Activated naive CD4-positive, alpha-beta T cell treated with anti-CD3 and anti-CD28 coated beads for 36 hours (primary cell): ENCODE measurements at regions of chr6 and their contacts with region 1.

Region 1: DNA sequence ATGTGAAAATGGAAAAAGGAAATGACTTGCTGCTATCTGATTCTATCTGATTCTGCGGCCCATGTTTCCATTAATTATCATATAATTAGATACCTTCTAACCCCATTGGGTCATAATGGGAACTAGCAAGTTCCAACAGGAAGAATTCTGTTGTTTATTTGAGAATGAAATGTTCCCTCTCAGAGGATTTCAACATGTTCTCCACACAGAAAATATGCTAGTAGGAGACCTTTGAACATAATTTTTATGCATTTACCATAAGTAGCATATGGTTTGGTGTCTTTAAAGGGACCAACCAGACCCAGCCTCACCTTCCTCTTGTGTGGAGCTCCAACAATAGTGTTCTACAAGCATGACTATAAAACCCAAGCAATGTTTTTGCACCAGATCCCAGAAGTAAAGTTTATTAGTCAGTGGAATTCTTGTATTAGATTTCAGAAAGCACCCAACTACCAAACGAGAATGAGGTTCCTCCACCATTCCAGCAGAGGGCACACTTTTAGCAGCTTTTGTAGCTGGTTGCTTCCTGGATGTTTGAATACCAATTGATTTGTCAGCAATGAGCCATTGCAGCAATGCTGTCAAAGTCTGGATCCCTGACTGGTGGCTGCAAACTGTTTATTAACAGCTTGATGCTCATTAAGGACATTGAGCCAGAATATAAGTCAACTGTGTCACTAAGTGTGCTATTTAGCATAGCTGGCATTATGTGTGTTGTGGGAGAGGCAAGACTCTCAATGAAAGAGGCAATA is 143.6 kb upstream of the GJE1 start:
- DNase-seq: peak; percentile 64
- H3K4me3 Mint-ChIP-seq: no peak overlapping the region
- H3K27ac Mint-ChIP-seq: no peak overlapping the region
- H3K4me1 Mint-ChIP-seq: no peaks in the 10 kb centered on the region
- H3K27me3 Mint-ChIP-seq: peaks cover 7% of the 10 kb centered on the region

Region 2: DNA sequence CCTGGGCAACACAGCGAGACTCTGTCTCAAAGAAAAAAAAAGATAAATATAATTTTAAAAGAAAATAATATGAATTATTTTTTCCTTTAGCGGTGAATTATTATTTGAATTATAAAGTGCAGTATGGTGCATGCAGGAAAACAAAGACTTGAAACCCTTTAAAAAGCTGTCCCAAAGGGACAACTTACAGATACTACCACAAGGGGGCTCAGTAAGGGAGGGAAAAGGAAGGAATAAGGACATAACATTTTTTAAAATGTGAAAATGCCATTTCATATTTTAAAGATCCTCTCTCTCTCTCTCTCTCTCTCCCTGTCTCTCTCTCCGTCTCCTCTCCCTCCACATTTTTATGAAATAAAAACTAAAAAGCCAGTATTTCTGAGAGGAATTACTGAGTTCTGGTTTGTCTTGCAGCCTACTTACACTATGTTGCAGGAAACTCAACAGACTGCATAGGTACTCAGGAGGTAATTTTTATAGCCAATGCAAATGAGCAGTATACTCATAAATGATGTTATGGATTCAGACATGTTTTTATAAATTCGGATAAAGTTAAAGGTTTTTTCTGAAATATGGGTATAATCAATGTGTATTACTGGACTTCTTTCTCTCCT is 311.4 kb before region 1 on chr6:
- CTCF ChIA-PET with region 1: no interaction called
- intact Hi-C with region 1: loop called (anchors 5 kb)
- DNase-seq: no peak
- H3K4me3 Mint-ChIP-seq: no peak overlapping the region
- H3K27ac Mint-ChIP-seq: no peak overlapping the region
- H3K4me1 Mint-ChIP-seq: no peaks in the 10 kb centered on the region
- H3K27me3 Mint-ChIP-seq: no peaks in the 10 kb centered on the region

Region 3: GRCh38 chr6:142013286-142013685 is 24.2 kb after region 1 on chr6:
- CTCF ChIA-PET with region 1: interaction called, 3 read pairs
- intact Hi-C with region 1: loop called (anchors 2 kb)
- DNase-seq: no peak
- H3K4me3 Mint-ChIP-seq: no peak overlapping the region
- H3K27ac Mint-ChIP-seq: no peak overlapping the region
- H3K4me1 Mint-ChIP-seq: peaks cover 14% of the 10 kb centered on the region
- H3K27me3 Mint-ChIP-seq: peaks cover 27% of the 10 kb centered on the region

Region 4: GRCh38 chr6:142045380-142046278 is 56.5 kb after region 1 on chr6:
- CTCF ChIA-PET with region 1: interaction called, 9 read pairs
- intact Hi-C with region 1: loop called (anchors 1 kb)
- DNase-seq: no peak
- H3K4me3 Mint-ChIP-seq: no peak overlapping the region
- H3K27ac Mint-ChIP-seq: no peak overlapping the region
- H3K4me1 Mint-ChIP-seq: no peaks in the 10 kb centered on the region
- H3K27me3 Mint-ChIP-seq: peaks cover 23% of the 10 kb centered on the region

Region 5: DNA sequence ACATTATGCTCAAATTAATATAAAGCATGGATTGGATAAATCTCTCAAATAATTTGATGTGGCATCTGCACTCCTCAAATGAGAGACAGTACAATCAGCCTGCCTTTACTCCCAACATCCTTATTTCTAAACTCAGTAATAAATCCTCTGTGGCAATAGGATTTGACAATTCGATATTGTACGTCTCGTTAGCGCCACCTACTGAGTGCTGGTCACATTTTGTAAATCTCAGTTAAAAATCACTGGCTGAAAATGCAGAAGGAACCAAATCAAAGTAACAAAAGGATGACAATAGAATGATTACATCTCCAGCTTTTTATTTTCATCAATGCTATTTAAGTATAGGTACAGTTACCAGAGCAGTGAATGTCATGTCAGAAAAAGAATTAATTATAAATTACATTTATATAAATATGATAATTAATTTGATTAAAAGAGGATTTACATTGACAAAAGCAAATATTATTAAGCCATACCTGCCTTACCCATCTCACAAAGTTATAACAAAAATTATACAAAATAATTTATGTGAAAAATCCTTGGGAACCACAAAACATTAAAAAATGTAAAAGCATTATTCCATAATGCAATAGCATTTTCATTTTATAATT is 123.4 kb after region 1 on chr6:
- CTCF ChIA-PET with region 1: interaction called, 63 read pairs
- intact Hi-C with region 1: loop called (anchors 1 kb)
- DNase-seq: peak; percentile 88
- H3K4me3 Mint-ChIP-seq: no peak overlapping the region
- H3K27ac Mint-ChIP-seq: no peak overlapping the region
- H3K4me1 Mint-ChIP-seq: no peaks in the 10 kb centered on the region
- H3K27me3 Mint-ChIP-seq: peaks cover 3% of the 10 kb centered on the region

Region 6: DNA sequence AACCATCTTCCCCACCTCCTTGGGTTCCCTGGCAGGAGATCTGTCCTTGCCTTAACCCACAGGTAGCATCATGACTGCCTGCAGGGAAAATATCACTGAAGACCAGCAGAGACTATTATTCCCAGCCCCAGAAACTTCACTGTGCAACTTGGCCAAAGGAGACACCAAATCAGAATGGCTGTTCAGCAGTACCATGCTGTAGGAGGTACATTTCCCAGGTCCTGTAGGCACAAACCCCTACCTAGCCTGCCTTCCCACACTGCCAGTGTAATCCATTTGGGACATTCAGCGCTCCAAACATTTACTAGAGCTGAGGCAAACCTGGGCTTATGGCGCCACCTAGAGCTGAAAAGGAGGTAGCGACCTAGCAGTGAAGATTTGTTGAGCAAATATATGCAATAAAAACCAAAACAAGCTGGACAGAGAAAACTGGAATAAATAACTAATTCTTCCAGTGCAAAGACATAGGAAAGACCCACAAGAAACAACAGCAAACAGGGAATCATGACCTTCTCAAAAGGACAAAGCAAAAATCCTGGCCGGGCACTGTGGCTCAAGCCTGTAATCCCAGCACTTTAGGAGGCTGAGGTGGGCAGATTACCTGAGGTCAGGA is 218.2 kb after region 1 on chr6:
- CTCF ChIA-PET with region 1: interaction called, 4 read pairs
- intact Hi-C with region 1: loop called (anchors 1 kb)
- DNase-seq: peak; percentile 62
- H3K4me3 Mint-ChIP-seq: no peak overlapping the region
- H3K27ac Mint-ChIP-seq: no peak overlapping the region
- H3K4me1 Mint-ChIP-seq: peaks cover 2% of the 10 kb centered on the region
- H3K27me3 Mint-ChIP-seq: no peaks in the 10 kb centered on the region

Region 7: DNA sequence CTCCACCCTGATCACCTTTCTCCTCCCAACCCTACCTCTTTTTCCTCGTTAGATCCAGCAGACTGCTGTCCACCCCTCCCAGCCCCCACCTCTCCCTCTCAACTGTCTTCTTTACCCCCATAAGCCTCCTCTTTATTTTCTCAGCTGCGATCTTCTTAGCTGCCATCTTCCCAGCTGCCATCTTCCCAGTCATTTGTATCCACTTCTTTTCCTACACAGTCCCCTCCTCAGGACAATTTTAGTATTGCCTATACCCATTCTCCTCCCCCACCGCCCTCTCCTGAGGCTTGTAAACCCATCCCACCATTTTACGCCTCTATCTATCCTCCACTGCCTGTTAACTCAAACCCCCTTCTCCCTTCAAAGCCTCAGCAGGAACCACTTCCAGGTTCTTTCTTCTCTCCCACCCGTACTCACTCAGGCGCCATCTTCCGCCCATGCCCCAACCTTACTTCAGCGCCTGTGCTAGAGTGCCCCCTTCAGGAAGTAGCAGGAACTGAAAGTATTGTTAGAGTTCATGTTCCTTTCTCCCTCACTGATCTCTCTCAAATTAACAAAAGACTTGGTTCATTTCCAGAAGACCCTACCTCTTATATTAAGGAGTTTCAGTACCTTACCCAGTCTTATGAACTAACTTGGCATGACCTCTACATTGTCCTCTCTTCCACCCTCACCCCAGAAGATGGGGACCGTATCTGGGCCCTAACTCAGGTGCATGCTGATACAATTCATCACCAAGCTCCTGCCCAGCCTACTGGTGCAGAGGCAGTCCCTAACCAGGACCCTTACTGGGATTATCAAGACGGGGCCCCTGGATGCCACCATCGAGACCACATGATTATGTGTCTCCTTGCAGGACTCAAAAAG is 548.7 kb after region 1 on chr6:
- CTCF ChIA-PET with region 1: no interaction called
- intact Hi-C with region 1: loop called (anchors 5 kb)
- DNase-seq: peak; percentile 55
- H3K4me3 Mint-ChIP-seq: no peak overlapping the region
- H3K27ac Mint-ChIP-seq: no peak overlapping the region
- H3K4me1 Mint-ChIP-seq: peaks cover 5% of the 10 kb centered on the region
- H3K27me3 Mint-ChIP-seq: no peaks in the 10 kb centered on the region